Activated CD8-positive, alpha-beta T cell treated with anti-CD3 and anti-CD28 coated beads, Interleukin-2, amount 10 ng/mL, durations not matched to agents 7 days and 5 days (primary cell): ENCODE measurements at regions of chr5 and their contacts with region 1.

Region 1: DNA sequence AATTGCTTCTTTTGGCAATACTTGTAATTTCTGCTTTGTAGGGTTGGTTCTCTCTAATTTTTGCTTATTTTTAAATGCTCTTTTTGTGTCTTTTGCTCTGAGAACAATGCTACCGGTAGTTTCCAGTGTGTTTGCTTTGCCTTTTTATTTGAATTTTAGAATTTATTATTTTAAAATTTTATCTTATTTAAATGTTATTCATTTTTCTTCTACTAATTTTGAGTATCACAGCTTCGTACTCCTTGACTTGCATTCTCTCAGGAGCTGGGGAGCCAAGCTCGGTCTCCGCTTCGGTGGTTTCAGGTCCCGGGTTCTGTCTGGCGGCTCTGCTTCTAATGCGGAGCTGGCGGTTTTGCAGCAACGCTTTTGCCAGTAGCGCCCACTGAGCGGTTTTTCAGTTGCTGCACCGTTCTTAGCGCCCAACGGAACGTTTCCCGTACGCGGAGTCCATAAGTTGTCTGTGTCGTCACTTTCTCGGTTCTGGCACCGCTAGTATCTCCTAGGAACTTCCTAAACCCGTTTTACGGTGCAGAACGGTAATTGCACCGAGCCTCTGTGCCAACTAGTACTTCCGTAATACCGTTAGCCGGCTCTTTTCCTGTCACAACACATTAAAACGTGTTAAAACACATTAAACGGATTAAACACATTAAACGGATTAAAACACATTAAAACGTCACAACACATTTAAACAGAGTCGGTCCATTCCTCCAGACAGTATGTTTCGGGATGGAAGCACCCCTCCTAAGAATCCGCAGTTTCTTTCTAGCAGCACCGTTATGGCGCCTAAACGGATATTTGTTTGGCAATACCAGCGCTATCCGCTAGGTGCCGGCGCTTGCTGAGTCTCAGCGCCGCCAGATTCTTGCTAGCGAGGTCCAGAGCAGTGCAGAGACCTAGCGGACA is 45.6 kb downstream of the ANXA2R start:
- DNase-seq: peak; percentile 94
- ATAC-seq: peak; percentile 60
- H3K4me3 Mint-ChIP-seq: peak overlapping the region; percentile 94
- H3K27ac Mint-ChIP-seq: peak overlapping the region; percentile 99
- H3K4me1 Mint-ChIP-seq: peaks cover 19% of the 10 kb centered on the region
- H3K27me3 Mint-ChIP-seq: no peaks in the 10 kb centered on the region

Region 2: GRCh38 chr5:43008369-43009153 is 14.1 kb after region 1 on chr5:
- CTCF ChIA-PET with region 1: interaction called, 138 read pairs
- POLR2A ChIA-PET with region 1: interaction called, 403 read pairs
- DNase-seq: peak; percentile 94
- ATAC-seq: peak; percentile 71
- H3K4me3 Mint-ChIP-seq: peak overlapping the region; percentile 90
- H3K27ac Mint-ChIP-seq: peak overlapping the region; percentile 98
- H3K4me1 Mint-ChIP-seq: peaks cover 44% of the 10 kb centered on the region
- H3K27me3 Mint-ChIP-seq: peaks cover 1% of the 10 kb centered on the region

Region 3: DNA sequence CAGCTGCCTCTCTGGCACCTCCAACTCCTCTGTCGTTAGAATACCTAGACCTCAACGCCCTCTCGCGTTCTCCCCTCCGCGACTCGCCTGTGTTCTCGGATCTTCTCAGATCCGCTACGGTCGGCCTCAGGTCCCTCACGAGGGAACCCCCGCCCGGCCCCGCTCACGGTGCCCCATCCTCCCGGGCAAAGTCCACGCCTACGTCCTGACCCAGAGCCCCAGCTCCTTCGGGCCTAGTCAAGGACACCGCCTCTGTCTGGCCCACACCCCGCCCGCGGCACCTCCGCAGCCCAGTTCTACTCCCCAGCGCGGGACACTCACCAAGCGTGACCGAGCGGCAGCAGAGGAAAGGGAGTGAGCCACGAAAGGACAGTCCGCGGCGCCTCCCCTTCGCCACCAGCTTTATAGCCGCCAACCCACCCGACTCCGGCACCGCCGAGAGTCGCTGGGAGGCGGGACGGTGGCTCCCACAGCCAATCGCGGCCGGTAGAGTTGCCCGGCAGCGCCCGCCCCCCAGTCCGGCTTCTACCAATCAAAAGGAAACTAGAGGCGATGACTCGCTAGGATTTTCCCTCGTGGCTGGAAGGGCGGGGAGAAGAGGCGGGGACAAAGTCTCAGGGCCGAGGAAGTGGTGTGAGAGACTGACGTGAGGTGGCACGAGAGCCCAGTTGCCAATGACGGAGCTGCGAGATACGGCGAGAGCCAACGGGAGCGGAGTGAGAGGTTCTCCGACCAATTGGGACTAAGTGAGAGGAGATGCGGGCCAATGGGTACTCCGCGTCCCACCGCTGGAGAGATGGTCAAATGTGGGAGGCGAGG is 318.7 kb after region 1 on chr5 and contains the start of gene HMGCS1:
- CTCF ChIA-PET with region 1: no interaction called
- POLR2A ChIA-PET with region 1: interaction called, 15 read pairs
- DNase-seq: peak; percentile 99
- ATAC-seq: peak; percentile 94
- H3K4me3 Mint-ChIP-seq: peak within 1 kb of the TSS; percentile 96
- H3K27ac Mint-ChIP-seq: peak within 1 kb of the TSS; percentile 95
- H3K4me1 Mint-ChIP-seq: peaks cover 62% of the 10 kb centered on the region
- H3K27me3 Mint-ChIP-seq: no peaks in the 10 kb centered on the region
- total RNA-seq, gene HMGCS1: 82.4 to 90.6 TPM